HepG2 (cell line): ENCODE measurements at regions of chr15 and their contacts with region 1.

Region 1: GRCh38 chr15:78437762-78438302 is at the start of gene IREB2:
- DNase-seq: peak; percentile 96
- ATAC-seq: peak; percentile 90
- H3K4me3 ChIP-seq: peak within 1 kb of the TSS; percentile 94 to 97 (median 96)
- H3K27ac ChIP-seq: peak within 1 kb of the TSS; percentile 99
- H3K4me1 ChIP-seq: peaks cover 57% of the 10 kb centered on the region
- H3K27me3 ChIP-seq: no peaks in the 10 kb centered on the region; a peak in 1 of 5 replicates
- CTCF ChIP-seq: no peak
- EP300 ChIP-seq: peak in 1 of 2 experiments; percentile 48; a peak in 2 of 4 replicates
- POLR2A ChIP-seq: peak; percentile 74 to 81
- RAD21 ChIP-seq: peak; percentile 41; the same call in 1 of the 2 replicates
- total RNA-seq, gene IREB2: 30.4 and 66.4 TPM in 2 replicates

Region 2: GRCh38 chr15:78308422-78309032 is 129.3 kb before region 1 on chr15:
- CTCF ChIA-PET with region 1: no interaction called
- POLR2A ChIA-PET with region 1: interaction called, 24 read pairs
- in situ Hi-C with region 1: no loop called
- intact Hi-C with region 1: loop called (anchors 5 kb)
- DNase-seq: peak; percentile 41
- ATAC-seq: peak; percentile 79
- H3K4me3 ChIP-seq: no peak overlapping the region
- H3K27ac ChIP-seq: no peak overlapping the region
- H3K4me1 ChIP-seq: peaks cover 31% of the 10 kb centered on the region
- H3K27me3 ChIP-seq: peaks cover 0 to 7% of the 10 kb centered on the region in 2 experiments; a peak in 3 of 5 replicates
- CTCF ChIP-seq: peak; percentile 94
- EP300 ChIP-seq: no peak
- POLR2A ChIP-seq: no peak
- RAD21 ChIP-seq: peak; percentile 88

Region 3: DNA sequence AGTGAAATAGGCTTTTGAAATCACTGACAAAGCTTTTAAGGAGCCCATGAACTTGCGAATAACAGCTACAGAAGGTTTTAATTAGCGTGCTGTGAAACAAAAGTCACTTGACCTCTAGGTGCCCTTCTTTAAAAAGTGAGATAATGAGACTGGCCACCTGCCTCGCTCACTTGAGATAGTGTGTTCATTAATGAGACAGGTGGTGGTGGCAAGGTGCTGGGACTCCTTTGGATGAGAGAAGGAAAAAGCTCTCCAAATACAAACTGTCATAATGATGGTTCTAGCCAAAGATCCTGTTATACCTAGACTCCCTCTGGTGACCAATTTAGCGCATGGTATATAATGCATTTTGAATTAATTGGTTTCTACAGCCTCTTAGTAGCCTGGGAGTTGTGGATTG is 22.5 kb before region 1 on chr15:
- CTCF ChIA-PET with region 1: no interaction called
- POLR2A ChIA-PET with region 1: interaction called, 15 read pairs
- in situ Hi-C with region 1: no loop called
- intact Hi-C with region 1: no loop called
- DNase-seq: no peak
- ATAC-seq: no peak; the same call in 2 of the 3 replicates
- H3K4me3 ChIP-seq: no peak overlapping the region
- H3K27ac ChIP-seq: no peak overlapping the region
- H3K4me1 ChIP-seq: peaks cover 29% of the 10 kb centered on the region
- H3K27me3 ChIP-seq: peaks cover 0 to 3% of the 10 kb centered on the region in 2 experiments; a peak in 1 of 5 replicates
- CTCF ChIP-seq: peak; percentile 26; the same call in 1 of the 2 replicates
- EP300 ChIP-seq: no peak
- POLR2A ChIP-seq: no peak
- RAD21 ChIP-seq: no peak

Region 4: DNA sequence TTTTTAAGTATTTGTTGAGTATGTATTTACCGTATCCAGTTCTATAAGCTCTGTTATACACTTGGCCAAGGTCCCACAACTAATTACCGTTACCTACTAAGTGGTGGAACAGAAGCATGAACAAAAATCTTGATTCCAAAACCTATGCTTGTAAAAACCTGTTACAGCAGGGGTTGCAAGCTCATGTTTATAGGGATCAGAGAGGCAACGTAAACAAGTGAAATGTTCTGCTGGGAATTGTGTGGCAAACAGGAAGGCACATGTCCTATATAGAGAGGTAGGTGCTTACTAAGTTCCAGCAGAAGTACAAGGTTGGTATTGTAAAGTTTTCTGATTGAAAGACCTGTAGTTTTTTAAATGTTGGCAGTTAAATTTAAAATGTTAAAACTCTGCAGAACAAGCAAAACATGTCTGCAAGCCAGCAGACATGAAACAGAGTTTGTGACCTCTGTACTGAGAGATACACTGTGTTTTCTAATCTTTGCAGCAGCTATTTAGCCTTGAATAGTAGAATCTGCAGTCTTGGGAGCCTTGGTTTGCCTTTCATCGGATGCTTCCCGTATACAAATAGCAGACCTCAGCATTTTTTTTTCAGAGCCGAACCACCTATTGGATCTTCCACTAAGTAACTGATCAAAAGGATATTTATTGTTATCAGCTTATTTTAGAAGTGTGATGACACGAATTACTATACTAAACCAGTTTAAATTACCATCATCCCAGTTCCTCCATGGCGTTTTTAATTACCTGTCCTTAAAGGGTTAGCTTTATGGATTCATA is 11.6 kb after region 1 on chr15:
- CTCF ChIA-PET with region 1: no interaction called
- POLR2A ChIA-PET with region 1: interaction called, 15 read pairs
- in situ Hi-C with region 1: no loop called
- intact Hi-C with region 1: no loop called
- DNase-seq: peak; percentile 8
- ATAC-seq: peak; percentile 58; the same call in 2 of the 3 replicates
- H3K4me3 ChIP-seq: no peak overlapping the region
- H3K27ac ChIP-seq: peak overlapping the region; percentile 28
- H3K4me1 ChIP-seq: peaks cover 46% of the 10 kb centered on the region
- H3K27me3 ChIP-seq: no peaks in the 10 kb centered on the region
- CTCF ChIP-seq: no peak
- EP300 ChIP-seq: no peak
- POLR2A ChIP-seq: no peak
- RAD21 ChIP-seq: no peak

Region 5: GRCh38 chr15:78492872-78493271 is 55.0 kb after region 1 on chr15:
- CTCF ChIA-PET with region 1: no interaction called
- POLR2A ChIA-PET with region 1: no interaction called
- in situ Hi-C with region 1: no loop called
- intact Hi-C with region 1: no loop called
- DNase-seq: no peak
- ATAC-seq: no peak
- H3K4me3 ChIP-seq: no peak overlapping the region
- H3K27ac ChIP-seq: no peak overlapping the region
- H3K4me1 ChIP-seq: no peaks in the 10 kb centered on the region
- H3K27me3 ChIP-seq: no peaks in the 10 kb centered on the region
- CTCF ChIP-seq: no peak
- EP300 ChIP-seq: no peak
- POLR2A ChIP-seq: no peak
- RAD21 ChIP-seq: no peak

Region 6: GRCh38 chr15:78540141-78540928 is 102.5 kb after region 1 on chr15 and contains the start of gene PSMA4:
- CTCF ChIA-PET with region 1: no interaction called
- POLR2A ChIA-PET with region 1: interaction called, 17 read pairs
- in situ Hi-C with region 1: no loop called
- intact Hi-C with region 1: no loop called
- DNase-seq: peak; percentile 73
- ATAC-seq: peak; percentile 92
- H3K4me3 ChIP-seq: peak within 1 kb of the TSS; percentile 83 to 88 (median 87)
- H3K27ac ChIP-seq: peak within 1 kb of the TSS; percentile 94
- H3K4me1 ChIP-seq: peaks cover 25% of the 10 kb centered on the region
- H3K27me3 ChIP-seq: no peaks in the 10 kb centered on the region; a peak in 1 of 5 replicates
- CTCF ChIP-seq: peak; percentile 31; the same call in 1 of the 2 replicates
- EP300 ChIP-seq: no peak; a peak in 1 of 4 replicates
- POLR2A ChIP-seq: peak; percentile 78 to 94
- RAD21 ChIP-seq: 0 out of 2 replicates have a peak, but pooled peaks have one; percentile 23
- total RNA-seq, gene PSMA4: 404 and 667 TPM in 2 replicates